Activated T-helper 2 cell treated with anti-CD3 and anti-CD28 coated beads, Interferon-gamma antibody, Interleukin-2, Interleukin-4, amounts not matched to agents 10 μg/mL and 5 μg/mL and 100 μg/mL, durations not matched to agents 14 hours and 24 hours and 36 hours (primary cell): ENCODE measurements at regions of chr3 and their contacts with region 1.

Region 1: GRCh38 chr3:27712136-27713077 is 9.7 kb downstream of the EOMES start:
- DNase-seq: peak; percentile 76
- H3K4me3 Mint-ChIP-seq: peak overlapping the region; percentile 93
- H3K27ac Mint-ChIP-seq: peak overlapping the region; percentile 85
- H3K4me1 Mint-ChIP-seq: peaks cover 38% of the 10 kb centered on the region
- H3K27me3 Mint-ChIP-seq: peaks cover 52% of the 10 kb centered on the region

Region 2: DNA sequence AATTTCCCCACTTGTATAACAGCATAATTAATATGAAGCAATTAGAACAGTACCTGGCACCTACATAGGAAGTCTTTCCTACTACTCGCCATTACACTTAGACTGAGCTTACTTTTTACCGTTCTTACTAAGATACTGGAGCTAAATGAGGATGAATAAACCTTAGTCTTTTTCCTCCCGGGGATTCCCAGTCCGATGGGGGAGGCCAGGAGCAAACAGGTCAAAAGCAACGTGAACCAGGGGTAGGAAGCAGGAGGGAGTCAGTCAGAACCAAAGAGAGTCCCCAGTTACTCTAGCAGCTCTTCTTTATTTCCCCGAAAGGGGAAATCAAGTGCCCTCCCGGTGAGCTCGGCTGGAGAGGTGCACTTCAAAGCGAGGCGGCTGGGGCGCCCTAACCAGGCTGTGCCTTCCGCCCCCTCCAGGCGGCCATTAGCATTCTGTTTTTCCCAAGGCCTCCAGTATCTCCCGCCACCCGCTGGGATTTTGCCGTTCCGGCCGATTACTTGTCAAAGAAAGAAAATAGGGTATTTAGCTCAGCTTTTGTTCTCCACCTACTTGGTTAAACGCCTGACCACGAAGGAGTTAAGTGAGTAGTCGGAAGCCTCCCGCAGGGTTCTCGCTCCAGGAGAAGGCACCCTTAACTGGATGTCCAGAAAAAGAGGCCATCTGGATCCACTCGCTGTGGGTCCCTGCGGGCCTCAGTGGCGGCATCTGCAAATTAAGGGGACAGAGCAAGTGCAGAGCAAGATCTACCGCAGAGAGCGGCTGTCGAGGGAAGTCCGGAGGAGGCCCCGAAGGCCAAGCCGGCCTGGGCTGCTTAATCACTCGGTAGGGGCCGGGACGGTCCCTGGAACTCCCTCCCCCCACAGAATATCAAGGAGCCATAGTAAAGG is 16.0 kb after region 1 on chr3:
- intact Hi-C with region 1: loop called (anchors 1 kb)
- DNase-seq: no peak
- H3K4me3 Mint-ChIP-seq: peak overlapping the region; percentile 64
- H3K27ac Mint-ChIP-seq: no peak overlapping the region
- H3K4me1 Mint-ChIP-seq: peaks cover 45% of the 10 kb centered on the region
- H3K27me3 Mint-ChIP-seq: peaks cover 87% of the 10 kb centered on the region

Region 3: DNA sequence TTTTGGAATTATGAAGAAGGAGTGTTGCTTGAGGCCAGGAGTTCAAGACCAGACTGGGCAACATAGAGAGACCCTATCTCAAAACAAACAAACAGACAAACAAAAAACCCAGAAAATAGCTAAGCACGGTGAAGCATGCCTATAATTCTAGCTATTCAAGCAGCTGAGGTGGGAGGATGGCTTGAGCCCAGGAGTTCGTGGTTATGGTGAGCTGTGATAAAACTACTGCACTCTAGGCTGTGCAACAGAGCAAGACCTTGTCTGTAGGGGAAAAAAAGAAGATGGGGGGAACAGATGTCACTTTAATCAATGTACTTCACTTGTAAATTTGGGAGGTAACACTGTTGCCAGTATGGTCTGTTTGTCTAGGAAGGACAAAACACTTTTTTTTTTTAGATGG is 28.4 kb after region 1 on chr3:
- intact Hi-C with region 1: no loop called
- DNase-seq: no peak
- H3K4me3 Mint-ChIP-seq: no peak overlapping the region
- H3K27ac Mint-ChIP-seq: no peak overlapping the region
- H3K4me1 Mint-ChIP-seq: no peaks in the 10 kb centered on the region
- H3K27me3 Mint-ChIP-seq: peaks cover 12% of the 10 kb centered on the region

Region 4: DNA sequence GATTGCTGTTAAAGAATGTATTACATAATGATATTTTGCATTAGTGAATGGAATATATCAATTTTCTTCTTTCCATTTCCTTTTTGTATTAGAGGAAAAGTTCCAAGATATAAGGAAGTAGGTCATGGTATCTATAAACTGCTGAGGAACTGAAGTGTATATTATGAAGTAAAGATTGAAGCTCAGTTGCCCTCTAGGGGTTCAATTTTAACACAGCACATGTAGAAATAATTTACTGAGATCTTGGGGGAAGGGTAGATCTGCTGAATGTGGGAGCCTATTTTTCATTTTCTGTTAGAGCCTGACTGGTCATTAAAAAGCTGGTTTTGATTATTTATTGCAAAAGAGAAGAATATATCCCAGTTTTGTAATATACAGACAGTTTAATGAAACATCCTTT is 574.2 kb after region 1 on chr3:
- intact Hi-C with region 1: loop called (anchors 2 kb)
- DNase-seq: no peak
- H3K4me3 Mint-ChIP-seq: no peak overlapping the region
- H3K27ac Mint-ChIP-seq: no peak overlapping the region
- H3K4me1 Mint-ChIP-seq: peaks cover 15% of the 10 kb centered on the region
- H3K27me3 Mint-ChIP-seq: no peaks in the 10 kb centered on the region

Region 5: DNA sequence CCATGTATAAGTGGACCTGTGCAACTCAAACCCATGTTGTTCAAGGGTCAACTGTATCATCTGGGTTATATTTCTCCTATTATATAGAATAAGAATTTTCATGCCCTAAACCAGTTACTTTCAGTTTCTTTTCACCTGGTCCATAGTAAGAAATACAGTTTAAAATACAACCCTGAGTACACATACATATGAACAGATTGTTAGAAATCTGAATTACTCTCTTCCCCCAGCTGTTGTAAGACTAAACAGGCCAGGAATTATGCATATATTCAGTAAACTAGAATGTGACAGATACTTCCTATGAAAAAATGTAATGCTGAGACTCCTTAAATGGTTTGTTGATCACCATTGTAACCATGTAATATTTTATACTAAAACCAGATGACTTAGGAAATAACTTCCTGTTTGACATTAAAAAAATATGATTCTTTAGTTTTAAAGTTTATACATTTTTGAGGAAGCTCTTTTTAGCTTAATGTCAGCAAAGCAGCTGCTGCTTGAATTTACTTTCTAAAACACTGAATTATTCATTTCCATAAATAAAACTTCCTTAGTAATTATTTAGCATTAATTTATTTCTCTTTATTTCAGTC is 583.6 kb after region 1 on chr3:
- intact Hi-C with region 1: loop called (anchors 2 kb)
- DNase-seq: no peak
- H3K4me3 Mint-ChIP-seq: no peak overlapping the region
- H3K27ac Mint-ChIP-seq: no peak overlapping the region
- H3K4me1 Mint-ChIP-seq: peaks cover 24% of the 10 kb centered on the region
- H3K27me3 Mint-ChIP-seq: no peaks in the 10 kb centered on the region